HepG2 (cell line): ENCODE measurements at regions of chr4 and their contacts with region 1.

Region 1: GRCh38 chr4:84407536-84408407 is 91.3 kb downstream of the NKX6-1 start:
- DNase-seq: no peak
- ATAC-seq: no peak
- H3K4me3 ChIP-seq: no peak overlapping the region
- H3K27ac ChIP-seq: no peak overlapping the region
- H3K4me1 ChIP-seq: no peaks in the 10 kb centered on the region
- H3K27me3 ChIP-seq: no peaks in the 10 kb centered on the region; a peak in 2 of 5 replicates
- CTCF ChIP-seq: no peak
- EP300 ChIP-seq: no peak
- POLR2A ChIP-seq: no peak
- RAD21 ChIP-seq: no peak

Region 2: GRCh38 chr4:84366136-84366535 is 41.6 kb before region 1 on chr4:
- CTCF ChIA-PET with region 1: no interaction called
- POLR2A ChIA-PET with region 1: no interaction called
- in situ Hi-C with region 1: no loop called
- intact Hi-C with region 1: no loop called
- DNase-seq: no peak
- ATAC-seq: no peak
- H3K4me3 ChIP-seq: no peak overlapping the region
- H3K27ac ChIP-seq: no peak overlapping the region
- H3K4me1 ChIP-seq: no peaks in the 10 kb centered on the region
- H3K27me3 ChIP-seq: no peaks in the 10 kb centered on the region; a peak in 1 of 5 replicates
- CTCF ChIP-seq: no peak
- EP300 ChIP-seq: no peak
- POLR2A ChIP-seq: no peak
- RAD21 ChIP-seq: no peak

Region 3: DNA sequence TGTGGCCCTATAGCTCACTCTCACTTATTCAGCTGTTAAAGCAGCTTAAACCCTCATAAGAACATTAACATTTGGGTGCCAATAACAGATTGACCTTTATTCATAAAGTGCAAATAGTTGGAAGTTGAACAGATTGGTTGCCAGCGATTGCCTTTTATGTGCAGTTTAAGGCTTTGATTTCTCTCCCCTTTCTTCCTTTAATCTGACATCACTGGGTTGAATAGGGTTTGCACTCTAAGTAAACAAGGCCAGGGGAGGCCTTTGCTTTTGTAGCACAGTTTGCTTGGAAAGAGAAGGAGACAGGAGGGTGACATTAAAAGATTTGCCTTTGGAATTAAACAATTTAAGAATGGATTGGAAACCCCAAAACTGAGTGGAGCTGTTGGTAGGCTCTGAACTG is 23.0 kb before region 1 on chr4:
- CTCF ChIA-PET with region 1: no interaction called
- POLR2A ChIA-PET with region 1: no interaction called
- in situ Hi-C with region 1: no loop called
- intact Hi-C with region 1: loop called (anchors 1 kb)
- DNase-seq: no peak
- ATAC-seq: no peak
- H3K4me3 ChIP-seq: no peak overlapping the region
- H3K27ac ChIP-seq: no peak overlapping the region
- H3K4me1 ChIP-seq: no peaks in the 10 kb centered on the region
- H3K27me3 ChIP-seq: no peaks in the 10 kb centered on the region
- CTCF ChIP-seq: no peak
- EP300 ChIP-seq: no peak
- POLR2A ChIP-seq: no peak
- RAD21 ChIP-seq: no peak

Region 4: GRCh38 chr4:84778041-84778440 is 370.3 kb after region 1 on chr4:
- CTCF ChIA-PET with region 1: no interaction called
- POLR2A ChIA-PET with region 1: no interaction called
- in situ Hi-C with region 1: no loop called
- intact Hi-C with region 1: no loop called
- DNase-seq: no peak
- ATAC-seq: no peak
- H3K4me3 ChIP-seq: no peak overlapping the region
- H3K27ac ChIP-seq: no peak overlapping the region
- H3K4me1 ChIP-seq: no peaks in the 10 kb centered on the region
- H3K27me3 ChIP-seq: no peaks in the 10 kb centered on the region; a peak in 1 of 5 replicates
- CTCF ChIP-seq: no peak
- EP300 ChIP-seq: no peak
- POLR2A ChIP-seq: no peak
- RAD21 ChIP-seq: no peak